Naive thymus-derived CD4-positive, alpha-beta T cell (primary cell): ENCODE measurements at regions of chr4 and their contacts with region 1.

Region 1: DNA sequence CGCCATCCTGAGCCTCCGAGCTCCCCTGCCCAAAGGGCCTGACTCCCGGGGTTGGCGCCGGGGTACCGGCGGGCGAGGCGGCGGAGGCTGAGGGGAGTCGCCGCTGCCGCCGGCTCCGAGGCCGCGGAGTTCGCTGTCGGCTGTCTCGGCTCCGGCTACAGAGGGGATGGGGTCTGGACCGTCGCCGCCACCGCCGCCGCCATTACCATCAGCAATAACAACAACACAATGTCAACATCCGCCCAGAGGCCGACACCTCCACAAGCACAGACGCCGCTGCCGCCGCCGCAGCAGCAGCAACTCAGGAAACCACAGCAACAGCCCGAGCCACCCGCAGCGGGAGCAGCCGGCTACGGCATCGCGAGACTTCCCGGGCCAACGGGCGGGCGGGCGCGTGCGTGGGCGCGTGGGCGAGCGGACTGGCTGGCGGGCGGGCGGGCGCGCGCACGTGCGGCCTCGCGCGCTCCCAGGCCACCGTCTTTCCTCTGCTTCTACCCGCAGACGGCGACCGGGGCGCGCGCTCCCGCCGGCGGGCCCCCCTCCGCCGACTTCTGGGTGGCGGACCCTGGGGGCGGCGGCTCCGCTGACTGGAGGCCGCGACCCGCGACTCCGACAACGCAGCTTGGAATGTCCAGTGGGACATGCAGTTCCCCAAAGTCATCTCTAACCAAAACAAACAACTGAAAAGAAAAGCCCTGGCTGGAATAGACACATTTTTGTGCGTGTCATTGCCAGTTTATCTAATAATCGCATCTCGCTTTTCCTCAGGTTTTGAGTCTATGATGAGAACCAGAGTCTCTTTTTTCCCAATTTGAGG is at the start of gene CHIC2:
- DNase-seq: peak; percentile 95 to 99 (median 98)
- ATAC-seq: peak; percentile 94
- H3K4me3 ChIP-seq: peak within 1 kb of the TSS; percentile 77
- H3K4me3 Mint-ChIP-seq: peak within 1 kb of the TSS; percentile 94 to 100 (median 97)
- H3K27ac ChIP-seq: peak within 1 kb of the TSS; percentile 100
- H3K27ac Mint-ChIP-seq: peak within 1 kb of the TSS; percentile 95 to 99 (median 98)
- H3K4me1 ChIP-seq: peaks cover 8 to 32% of the 10 kb centered on the region in 2 donors
- H3K4me1 Mint-ChIP-seq: peaks cover 39 to 59% (median 44%) of the 10 kb centered on the region in 7 donors
- H3K27me3 ChIP-seq: no peaks in the 10 kb centered on the region
- H3K27me3 Mint-ChIP-seq: peaks cover 0 to 2% (median 0%) of the 10 kb centered on the region in 5 donors
- total RNA-seq, gene CHIC2: 22.4 to 55.7 (median 40.7) TPM

Region 2: DNA sequence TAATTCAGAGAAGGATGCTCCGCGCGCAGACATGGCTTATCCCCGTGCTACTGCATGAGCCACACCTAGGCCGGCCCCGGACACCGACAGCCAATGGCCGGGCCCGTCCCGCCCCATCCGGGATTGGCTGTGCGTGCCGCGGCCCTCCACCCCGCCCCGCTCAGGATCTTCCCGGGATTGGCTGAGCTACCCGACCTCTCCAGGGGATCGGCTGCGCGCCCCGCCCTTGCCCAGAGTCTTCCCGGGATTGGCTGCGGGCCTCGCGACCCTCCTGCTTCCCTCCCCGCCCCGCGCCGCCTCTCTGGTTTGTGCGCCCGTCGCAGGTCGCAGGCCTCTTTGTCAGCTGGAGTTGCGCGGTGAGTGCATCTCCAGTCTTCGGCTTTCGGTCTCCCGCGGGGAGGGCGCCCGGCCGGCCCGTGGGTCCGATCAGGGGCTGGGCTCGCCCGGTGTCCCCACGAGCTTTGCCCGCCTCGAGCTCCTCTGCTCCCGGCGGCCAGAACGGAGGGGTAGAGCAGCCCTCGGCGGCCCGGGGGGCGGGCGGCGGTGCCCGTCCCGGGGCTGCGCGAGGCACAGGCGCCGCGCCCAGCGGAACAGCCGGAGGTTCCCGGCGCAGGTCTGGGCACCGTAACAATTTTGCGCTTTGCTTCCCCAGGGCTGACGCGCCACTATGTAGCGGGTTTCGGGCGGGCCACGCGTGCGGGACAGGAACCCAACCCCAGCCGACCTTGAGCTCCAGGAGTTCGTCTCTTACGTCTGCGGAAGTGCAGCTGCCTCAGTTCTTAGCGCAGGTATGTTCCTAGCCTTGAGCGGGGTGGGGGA is 1352.1 kb before region 1 on chr4:
- CTCF ChIA-PET with region 1: interaction called, 3 read pairs
- POLR2A ChIA-PET with region 1: interaction called, 5 read pairs
- intact Hi-C with region 1: loop called (anchors 1 kb)
- DNase-seq: peak; percentile 81 to 97 (median 95)
- ATAC-seq: peak; percentile 96
- H3K4me3 ChIP-seq: peak overlapping the region; percentile 73
- H3K4me3 Mint-ChIP-seq: peak overlapping the region; percentile 82 to 96 (median 92)
- H3K27ac ChIP-seq: peak overlapping the region; percentile 81
- H3K27ac Mint-ChIP-seq: peak overlapping the region; percentile 87 to 98 (median 96)
- H3K4me1 ChIP-seq: peaks cover 23 to 24% of the 10 kb centered on the region in 2 donors
- H3K4me1 Mint-ChIP-seq: peaks cover 23 to 46% (median 38%) of the 10 kb centered on the region in 7 donors
- H3K27me3 ChIP-seq: no peaks in the 10 kb centered on the region
- H3K27me3 Mint-ChIP-seq: peaks cover 0 to under 1% (median 0%) of the 10 kb centered on the region in 5 donors

Region 3: DNA sequence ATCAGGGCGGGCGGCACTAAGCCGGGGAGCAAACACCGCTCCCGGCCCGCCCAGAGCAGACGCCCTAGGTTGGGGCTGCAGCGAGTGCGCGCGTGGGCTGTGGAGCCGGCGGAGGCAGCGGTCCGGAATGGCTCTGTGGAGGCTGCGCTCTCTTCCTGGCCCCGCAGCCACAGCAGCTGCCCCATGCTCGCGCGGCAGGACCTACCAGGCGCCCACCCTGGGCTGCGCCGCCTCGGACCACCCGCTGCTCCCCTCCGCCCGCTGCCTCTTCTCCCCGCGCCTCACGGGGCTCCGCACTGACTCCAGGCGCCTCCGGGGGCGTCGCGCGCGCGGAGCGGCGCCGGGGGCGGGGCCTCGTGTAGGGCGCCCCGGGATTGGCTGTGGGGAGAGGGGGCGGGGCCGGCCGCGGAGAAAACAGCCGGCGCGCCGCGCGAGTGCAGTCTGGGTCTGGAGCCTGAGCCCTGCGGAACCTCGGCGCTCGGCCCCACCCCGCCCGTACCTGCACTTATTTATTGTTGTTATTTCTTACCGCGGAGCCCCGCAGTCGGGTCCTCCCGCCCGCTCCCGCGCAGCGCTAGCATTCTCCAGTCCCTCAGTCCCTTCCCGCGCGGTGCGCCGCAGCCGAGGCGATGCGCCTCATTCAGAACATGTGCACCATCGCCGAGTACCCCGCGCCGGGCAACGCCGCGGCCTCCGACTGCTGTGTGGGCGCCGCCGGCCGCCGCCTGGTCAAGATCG is 1202.5 kb before region 1 on chr4 and contains the start of gene RASL11B:
- CTCF ChIA-PET with region 1: no interaction called
- POLR2A ChIA-PET with region 1: no interaction called
- intact Hi-C with region 1: loop called in 1 of 2 experiments (anchors 1 kb)
- DNase-seq: peak; percentile 73 to 91 (median 84)
- ATAC-seq: peak; percentile 99
- H3K4me3 ChIP-seq: peak within 1 kb of the TSS; percentile 58
- H3K4me3 Mint-ChIP-seq: peak within 1 kb of the TSS; percentile 74 to 88 (median 84)
- H3K27ac ChIP-seq: peak within 1 kb of the TSS; percentile 34
- H3K27ac Mint-ChIP-seq: peak within 1 kb of the TSS in 5 of 9 donors; percentile 16 to 87 (median 49)
- H3K4me1 ChIP-seq: peaks cover 0 to 6% of the 10 kb centered on the region in 2 donors
- H3K4me1 Mint-ChIP-seq: peaks cover 0 to 17% (median 8%) of the 10 kb centered on the region in 7 donors
- H3K27me3 ChIP-seq: no peaks in the 10 kb centered on the region
- H3K27me3 Mint-ChIP-seq: peaks cover 28 to 41% (median 38%) of the 10 kb centered on the region in 5 donors
- total RNA-seq, gene RASL11B: 0.41 TPM in 1 of 5 experiments, not detected in the others

Region 4: GRCh38 chr4:54005475-54005874 is 59.0 kb before region 1 on chr4:
- CTCF ChIA-PET with region 1: no interaction called
- POLR2A ChIA-PET with region 1: no interaction called
- intact Hi-C with region 1: loop called (anchors 2 kb)
- DNase-seq: no peak
- ATAC-seq: no peak
- H3K4me3 ChIP-seq: no peak overlapping the region
- H3K4me3 Mint-ChIP-seq: peak overlapping the region in 1 of 10 donors; percentile 55
- H3K27ac ChIP-seq: no peak overlapping the region
- H3K27ac Mint-ChIP-seq: peak overlapping the region in 1 of 9 donors; percentile 66
- H3K4me1 ChIP-seq: peaks cover 0 to 7% of the 10 kb centered on the region in 2 donors
- H3K4me1 Mint-ChIP-seq: peaks cover 0 to 26% (median 6%) of the 10 kb centered on the region in 7 donors
- H3K27me3 ChIP-seq: no peaks in the 10 kb centered on the region
- H3K27me3 Mint-ChIP-seq: no peaks in the 10 kb centered on the region

Region 5: DNA sequence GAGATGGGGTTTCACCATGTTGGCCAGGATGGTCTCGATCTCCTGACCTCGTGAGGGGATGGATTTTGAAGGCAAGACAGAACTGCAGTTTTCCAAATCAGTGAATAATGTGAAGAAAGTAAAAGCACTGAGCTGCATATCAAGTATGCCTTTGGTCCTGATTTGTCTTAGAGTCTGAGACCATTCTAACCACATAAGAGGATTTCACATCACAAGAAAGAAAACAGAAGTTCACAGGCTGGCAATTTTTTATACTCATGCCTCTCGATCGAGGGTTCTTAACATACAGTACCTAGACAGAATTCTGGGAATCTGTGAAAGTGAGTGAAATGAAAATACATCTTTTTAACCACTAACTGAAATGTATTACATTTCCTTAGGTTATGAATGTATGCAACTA is 23.4 kb before region 1 on chr4:
- CTCF ChIA-PET with region 1: no interaction called
- POLR2A ChIA-PET with region 1: no interaction called
- intact Hi-C with region 1: loop called in 1 of 2 experiments (anchors 1 kb)
- DNase-seq: peak in 4 of 9 donors; percentile 31 to 52 (median 42)
- ATAC-seq: peak; percentile 58
- H3K4me3 ChIP-seq: no peak overlapping the region
- H3K4me3 Mint-ChIP-seq: peak overlapping the region in 6 of 10 donors; percentile 19 to 78 (median 45)
- H3K27ac ChIP-seq: no peak overlapping the region
- H3K27ac Mint-ChIP-seq: peak overlapping the region in 4 of 9 donors; percentile 6 to 66 (median 31)
- H3K4me1 ChIP-seq: peaks cover 7 to 8% of the 10 kb centered on the region in 2 donors
- H3K4me1 Mint-ChIP-seq: peaks cover 13 to 62% (median 53%) of the 10 kb centered on the region in 7 donors
- H3K27me3 ChIP-seq: no peaks in the 10 kb centered on the region
- H3K27me3 Mint-ChIP-seq: no peaks in the 10 kb centered on the region

Region 6: GRCh38 chr4:55546756-55547465 is 1482.4 kb after region 1 on chr4 and contains the start of gene CLOCK:
- CTCF ChIA-PET with region 1: no interaction called
- POLR2A ChIA-PET with region 1: no interaction called
- intact Hi-C with region 1: loop called in 1 of 2 experiments (anchors 10 kb)
- DNase-seq: peak; percentile 79 to 87 (median 83)
- ATAC-seq: peak; percentile 82
- H3K4me3 ChIP-seq: peak within 1 kb of the TSS; percentile 82
- H3K4me3 Mint-ChIP-seq: peak within 1 kb of the TSS; percentile 88 to 96 (median 94)
- H3K27ac ChIP-seq: peak within 1 kb of the TSS; percentile 84
- H3K27ac Mint-ChIP-seq: peak within 1 kb of the TSS; percentile 87 to 92 (median 90)
- H3K4me1 ChIP-seq: peaks cover 5 to 8% of the 10 kb centered on the region in 2 donors
- H3K4me1 Mint-ChIP-seq: peaks cover 21 to 57% (median 40%) of the 10 kb centered on the region in 7 donors
- H3K27me3 ChIP-seq: no peaks in the 10 kb centered on the region
- H3K27me3 Mint-ChIP-seq: peaks cover 0 to 29% (median 0%) of the 10 kb centered on the region in 5 donors
- total RNA-seq, gene CLOCK: 7.9 to 12.6 (median 8.9) TPM